ENCODE measurements at regions of chr11 and their contacts with region 1.

Region 1: GRCh38 chr11:2151500-2152257 is 9.3 kb downstream of the INS start:
- H3K4me3 ChIP-seq: no peak overlapping the region
- H3K27ac ChIP-seq: no peak overlapping the region
- H3K4me1 ChIP-seq: no peaks in the 10 kb centered on the region
- CTCF ChIP-seq: peak; percentile 27

Region 2: GRCh38 chr11:1694064-1694845 is 457.4 kb before region 1 on chr11:
- CTCF ChIA-PET with region 1: interaction called, 119 read pairs
- POLR2A ChIA-PET with region 1: interaction called, 3 read pairs
- H3K4me3 ChIP-seq: no peak overlapping the region
- H3K27ac ChIP-seq: no peak overlapping the region
- H3K4me1 ChIP-seq: no peaks in the 10 kb centered on the region
- CTCF ChIP-seq: peak; percentile 91

Region 3: GRCh38 chr11:1845561-1846452 is 305.9 kb before region 1 on chr11:
- CTCF ChIA-PET with region 1: interaction called, 35 read pairs
- POLR2A ChIA-PET with region 1: no interaction called
- H3K4me3 ChIP-seq: no peak overlapping the region
- H3K27ac ChIP-seq: no peak overlapping the region
- H3K4me1 ChIP-seq: no peaks in the 10 kb centered on the region
- CTCF ChIP-seq: no peak

Region 4: DNA sequence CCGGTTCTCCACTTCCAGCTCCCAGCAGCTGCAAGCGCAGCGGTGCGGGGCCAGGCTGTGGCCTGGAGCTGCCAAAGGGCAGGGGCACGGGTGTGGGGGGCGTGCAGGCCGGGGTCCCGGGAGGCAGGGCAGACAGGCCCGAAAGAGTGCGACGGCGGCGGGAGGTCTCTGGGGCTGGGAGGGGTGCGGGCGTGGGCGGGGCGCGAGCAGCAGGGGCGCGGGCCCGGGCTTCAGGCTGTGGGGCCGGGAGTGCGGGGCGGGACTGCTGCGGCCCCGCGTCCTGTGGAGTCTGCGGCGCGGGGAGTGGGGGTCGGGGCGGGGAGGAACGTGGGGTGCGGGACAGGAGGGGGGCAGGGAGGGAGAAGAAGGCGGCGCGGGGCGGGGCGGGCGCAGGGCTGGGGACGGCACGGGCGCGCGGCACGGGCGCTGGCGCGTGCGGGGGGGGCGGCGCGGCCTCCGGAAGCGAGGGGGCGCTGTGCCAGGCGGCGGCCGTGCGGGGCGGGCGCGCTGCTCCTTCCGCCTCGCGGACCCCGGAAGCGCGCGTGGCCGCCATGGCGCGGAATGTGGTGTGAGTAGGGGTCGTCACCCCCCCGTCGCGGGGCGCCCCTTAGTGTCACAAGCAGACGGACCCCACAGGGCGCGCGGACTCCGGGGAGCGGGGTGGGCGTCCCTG is 204.7 kb before region 1 on chr11 and contains the start of gene MRPL23:
- CTCF ChIA-PET with region 1: interaction called, 57 read pairs
- POLR2A ChIA-PET with region 1: interaction called, 6 read pairs
- H3K4me3 ChIP-seq: no peak within 1 kb of the TSS
- H3K27ac ChIP-seq: no peak within 1 kb of the TSS
- H3K4me1 ChIP-seq: no peaks in the 10 kb centered on the region
- CTCF ChIP-seq: no peak

Region 5: DNA sequence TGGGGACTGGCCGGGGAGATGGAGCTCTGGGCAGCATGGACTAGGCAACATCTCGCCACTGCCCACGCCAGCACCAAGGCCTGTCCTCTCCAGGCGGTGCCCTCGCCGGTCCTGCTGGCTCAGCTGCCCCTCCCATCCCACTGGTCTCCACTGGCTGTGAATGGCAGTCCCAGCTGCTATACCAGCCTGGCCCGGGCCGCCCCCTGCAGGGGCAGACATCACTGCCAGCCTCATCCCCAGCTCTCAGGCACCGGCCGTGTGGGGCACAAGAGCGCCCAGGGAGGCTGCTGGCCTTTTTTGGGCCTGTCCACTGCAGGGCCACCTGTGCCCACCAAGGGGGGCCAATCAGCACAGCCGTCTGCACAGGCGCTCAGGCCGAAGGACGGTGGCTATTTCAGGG is 124.0 kb before region 1 on chr11:
- CTCF ChIA-PET with region 1: interaction called, 46 read pairs
- POLR2A ChIA-PET with region 1: interaction called, 5 read pairs
- H3K4me3 ChIP-seq: no peak overlapping the region
- H3K27ac ChIP-seq: no peak overlapping the region
- H3K4me1 ChIP-seq: no peaks in the 10 kb centered on the region
- CTCF ChIP-seq: no peak

Region 6: GRCh38 chr11:2420502-2421225 is 269.0 kb after region 1 on chr11:
- CTCF ChIA-PET with region 1: interaction called, 10 read pairs
- POLR2A ChIA-PET with region 1: no interaction called
- H3K4me3 ChIP-seq: no peak overlapping the region
- H3K27ac ChIP-seq: no peak overlapping the region
- H3K4me1 ChIP-seq: no peaks in the 10 kb centered on the region
- CTCF ChIP-seq: peak; percentile 90